ENCODE measurements at regions of chr11 and their contacts with region 1.

Region 1: GRCh38 chr11:67265633-67266423 is 445 bp upstream of the GRK2 start:
- DNase-seq: peak; percentile 90
- ATAC-seq: peak; percentile 62
- H3K4me3 Mint-ChIP-seq: peak overlapping the region; percentile 77
- H3K27ac Mint-ChIP-seq: peak overlapping the region; percentile 84
- H3K4me1 Mint-ChIP-seq: peaks cover 67% of the 10 kb centered on the region
- H3K27me3 Mint-ChIP-seq: peaks cover 2% of the 10 kb centered on the region
- CTCF ChIP-seq: no peak

Region 2: GRCh38 chr11:67082035-67082791 is 183.6 kb before region 1 on chr11:
- CTCF ChIA-PET with region 1: interaction called, 5 read pairs
- POLR2A ChIA-PET with region 1: interaction called, 8 read pairs
- intact Hi-C with region 1: loop called (anchors 1 kb)
- DNase-seq: no peak
- ATAC-seq: no peak
- H3K4me3 Mint-ChIP-seq: peak overlapping the region; percentile 41
- H3K27ac Mint-ChIP-seq: no peak overlapping the region
- H3K4me1 Mint-ChIP-seq: peaks cover 14% of the 10 kb centered on the region
- H3K27me3 Mint-ChIP-seq: peaks cover 10% of the 10 kb centered on the region
- CTCF ChIP-seq: no peak

Region 3: GRCh38 chr11:67277231-67277961 is 11.6 kb after region 1 on chr11:
- CTCF ChIA-PET with region 1: interaction called, 15 read pairs
- POLR2A ChIA-PET with region 1: interaction called, 280 read pairs
- intact Hi-C with region 1: loop called (anchors 1 kb)
- DNase-seq: peak; percentile 85
- ATAC-seq: peak; percentile 93
- H3K4me3 Mint-ChIP-seq: peak overlapping the region; percentile 59
- H3K27ac Mint-ChIP-seq: peak overlapping the region; percentile 98
- H3K4me1 Mint-ChIP-seq: peaks cover 85% of the 10 kb centered on the region
- H3K27me3 Mint-ChIP-seq: no peaks in the 10 kb centered on the region
- CTCF ChIP-seq: no peak

Region 4: DNA sequence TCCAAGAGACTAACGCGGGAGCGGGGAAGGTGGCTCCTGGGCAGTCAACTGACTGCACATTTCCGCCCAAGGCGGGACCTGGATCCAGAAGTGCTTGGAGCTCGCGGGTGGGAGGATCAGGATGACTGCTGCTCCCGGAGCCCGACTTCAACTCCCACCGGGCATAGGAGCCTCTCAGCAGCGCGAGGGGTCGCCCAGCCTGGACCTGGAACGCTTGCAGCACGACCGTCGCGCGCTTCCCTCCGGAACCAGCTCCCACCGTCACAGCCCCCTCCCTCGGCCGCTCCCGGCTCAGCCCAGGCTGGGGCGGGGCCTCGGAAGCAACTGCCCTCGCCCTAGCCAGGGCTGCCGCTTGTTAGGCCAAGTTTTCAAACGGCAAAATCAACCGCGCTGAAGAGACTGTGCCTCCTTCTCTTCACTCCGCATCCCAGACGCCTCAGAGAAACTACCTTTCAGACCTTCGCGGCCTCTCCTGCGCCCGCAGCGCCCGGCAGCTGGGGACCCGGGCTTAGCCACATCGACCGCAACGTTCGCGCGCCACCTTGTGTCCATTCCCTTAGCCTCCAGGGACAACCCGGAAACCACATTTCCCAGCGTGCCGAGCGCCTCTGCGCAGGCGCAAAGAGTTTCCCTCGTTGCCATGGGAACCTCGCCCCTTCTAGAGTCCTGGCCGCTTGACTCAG is 51.5 kb after region 1 on chr11:
- CTCF ChIA-PET with region 1: interaction called, 75 read pairs
- POLR2A ChIA-PET with region 1: interaction called, 85 read pairs
- intact Hi-C with region 1: loop called (anchors 1 kb)
- DNase-seq: peak; percentile 96
- ATAC-seq: peak; percentile 82
- H3K4me3 Mint-ChIP-seq: peak overlapping the region; percentile 98
- H3K27ac Mint-ChIP-seq: peak overlapping the region; percentile 98
- H3K4me1 Mint-ChIP-seq: peaks cover 23% of the 10 kb centered on the region
- H3K27me3 Mint-ChIP-seq: no peaks in the 10 kb centered on the region
- CTCF ChIP-seq: no peak

Region 5: GRCh38 chr11:67382276-67383136 is 116.7 kb after region 1 on chr11:
- CTCF ChIA-PET with region 1: interaction called, 54 read pairs
- POLR2A ChIA-PET with region 1: interaction called, 22 read pairs
- intact Hi-C with region 1: loop called (anchors 1 kb)
- DNase-seq: peak; percentile 75
- ATAC-seq: peak; percentile 80
- H3K4me3 Mint-ChIP-seq: peak overlapping the region; percentile 70
- H3K27ac Mint-ChIP-seq: peak overlapping the region; percentile 90
- H3K4me1 Mint-ChIP-seq: peaks cover 31% of the 10 kb centered on the region
- H3K27me3 Mint-ChIP-seq: no peaks in the 10 kb centered on the region
- CTCF ChIP-seq: peak; percentile 47

Measured in activated B cell treated with CpG ODN at 0.5 μM for 24 hours (primary cell).